CD8-positive, alpha-beta memory T cell (primary cell): ENCODE measurements at regions of chr22 and their contacts with region 1.

Region 1: DNA sequence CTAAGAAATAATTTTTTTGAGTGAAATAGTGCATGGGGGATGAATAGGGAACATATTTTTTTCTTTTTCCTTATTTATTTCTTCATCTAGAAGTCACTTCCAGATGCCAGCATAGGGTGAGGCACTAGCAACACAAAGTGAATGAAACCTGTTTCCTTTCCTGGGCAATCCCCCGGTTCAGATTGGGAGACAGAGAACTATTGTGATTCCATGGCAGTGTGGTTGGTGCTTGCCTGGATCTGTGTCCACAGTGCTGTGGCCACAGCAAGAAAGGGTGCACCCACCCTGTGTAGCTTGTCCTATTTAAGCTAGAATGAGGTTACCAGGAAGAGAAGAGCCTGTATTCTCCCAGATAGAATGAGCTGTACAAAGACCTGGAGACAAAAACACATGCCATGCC is 57.6 kb downstream of the SLC5A1 start:
- DNase-seq: no peak
- H3K4me3 ChIP-seq: no peak overlapping the region
- H3K4me3 Mint-ChIP-seq: no peak overlapping the region
- H3K27ac ChIP-seq: no peak overlapping the region
- H3K27ac Mint-ChIP-seq: peak overlapping the region in 1 of 8 donors; percentile 49
- H3K4me1 ChIP-seq: no peaks in the 10 kb centered on the region
- H3K4me1 Mint-ChIP-seq: no peaks in the 10 kb centered on the region
- H3K27me3 ChIP-seq: no peaks in the 10 kb centered on the region
- H3K27me3 Mint-ChIP-seq: peaks cover 1 to 32% of the 10 kb centered on the region in 2 donors

Region 2: GRCh38 chr22:32050678-32051515 is 49.8 kb before region 1 on chr22:
- CTCF ChIA-PET with region 1: no interaction called
- POLR2A ChIA-PET with region 1: no interaction called
- DNase-seq: peak in 4 of 5 donors; percentile 16 to 73 (median 32)
- H3K4me3 ChIP-seq: no peak overlapping the region
- H3K4me3 Mint-ChIP-seq: no peak overlapping the region
- H3K27ac ChIP-seq: no peak overlapping the region
- H3K27ac Mint-ChIP-seq: peak overlapping the region in 3 of 8 donors; percentile 31 to 65 (median 64)
- H3K4me1 ChIP-seq: peaks cover 9% of the 10 kb centered on the region
- H3K4me1 Mint-ChIP-seq: peaks cover 8 to 19% (median 14%) of the 10 kb centered on the region in 3 donors
- H3K27me3 ChIP-seq: no peaks in the 10 kb centered on the region
- H3K27me3 Mint-ChIP-seq: peaks cover 11 to 51% of the 10 kb centered on the region in 2 donors

Region 3: GRCh38 chr22:32088084-32088483 is 12.6 kb before region 1 on chr22:
- CTCF ChIA-PET with region 1: no interaction called
- POLR2A ChIA-PET with region 1: no interaction called
- DNase-seq: no peak
- H3K4me3 ChIP-seq: no peak overlapping the region
- H3K4me3 Mint-ChIP-seq: no peak overlapping the region
- H3K27ac ChIP-seq: no peak overlapping the region
- H3K27ac Mint-ChIP-seq: no peak overlapping the region
- H3K4me1 ChIP-seq: no peaks in the 10 kb centered on the region
- H3K4me1 Mint-ChIP-seq: no peaks in the 10 kb centered on the region
- H3K27me3 ChIP-seq: peaks cover 3% of the 10 kb centered on the region
- H3K27me3 Mint-ChIP-seq: peaks cover 5 to 29% of the 10 kb centered on the region in 2 donors

Region 4: DNA sequence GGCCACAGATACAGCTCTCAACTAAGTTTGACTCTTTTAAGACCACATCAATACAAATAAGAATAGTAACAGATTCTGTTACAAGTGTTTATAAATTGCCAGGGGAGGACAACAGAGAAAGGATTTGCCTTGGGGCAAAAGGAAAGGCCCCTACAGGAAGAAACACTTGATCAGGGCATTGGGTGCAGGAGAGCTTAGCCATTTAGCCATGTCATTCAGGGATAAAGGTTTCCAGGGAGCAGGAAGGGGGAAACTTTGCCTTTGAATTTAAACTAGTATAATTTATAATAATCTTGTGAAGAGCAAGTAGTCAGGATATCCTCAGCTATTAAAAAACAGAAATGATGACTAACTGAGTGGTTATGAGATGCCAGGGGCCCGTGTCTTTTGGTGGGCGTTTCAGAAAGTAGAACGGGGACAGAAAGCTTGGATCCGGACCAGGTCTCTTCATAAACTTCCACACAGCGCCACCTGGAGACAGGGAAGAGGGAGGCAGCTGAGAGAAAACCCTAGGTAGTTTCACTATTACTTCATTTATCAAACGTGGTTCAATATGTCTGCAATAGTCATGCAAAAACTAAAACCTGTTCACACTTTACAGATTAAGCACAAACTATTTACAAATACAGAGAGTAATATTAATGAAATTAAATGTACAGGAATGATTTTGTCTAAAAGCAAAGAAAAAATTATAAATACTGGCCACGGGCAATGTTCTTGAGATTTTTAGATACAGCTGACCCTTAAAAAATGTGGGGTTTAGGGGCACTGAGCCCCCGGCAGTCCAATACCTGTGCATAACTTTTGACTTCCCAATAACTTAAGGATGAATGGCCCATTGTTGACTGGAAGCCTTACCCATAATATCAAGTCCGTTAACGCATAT is 165.4 kb after region 1 on chr22:
- CTCF ChIA-PET with region 1: interaction called, 12 read pairs
- POLR2A ChIA-PET with region 1: no interaction called
- DNase-seq: peak; percentile 41 to 74 (median 50)
- H3K4me3 ChIP-seq: no peak overlapping the region
- H3K4me3 Mint-ChIP-seq: peak overlapping the region in 3 of 7 donors; percentile 4 to 29 (median 5)
- H3K27ac ChIP-seq: no peak overlapping the region
- H3K27ac Mint-ChIP-seq: peak overlapping the region in 2 of 8 donors; percentile 75
- H3K4me1 ChIP-seq: no peaks in the 10 kb centered on the region
- H3K4me1 Mint-ChIP-seq: peaks cover 2 to 10% (median 8%) of the 10 kb centered on the region in 3 donors
- H3K27me3 ChIP-seq: no peaks in the 10 kb centered on the region
- H3K27me3 Mint-ChIP-seq: peaks cover 0 to 8% of the 10 kb centered on the region in 2 donors